ENCODE measurements at regions of chr22 and their contacts with region 1.

Region 1: DNA sequence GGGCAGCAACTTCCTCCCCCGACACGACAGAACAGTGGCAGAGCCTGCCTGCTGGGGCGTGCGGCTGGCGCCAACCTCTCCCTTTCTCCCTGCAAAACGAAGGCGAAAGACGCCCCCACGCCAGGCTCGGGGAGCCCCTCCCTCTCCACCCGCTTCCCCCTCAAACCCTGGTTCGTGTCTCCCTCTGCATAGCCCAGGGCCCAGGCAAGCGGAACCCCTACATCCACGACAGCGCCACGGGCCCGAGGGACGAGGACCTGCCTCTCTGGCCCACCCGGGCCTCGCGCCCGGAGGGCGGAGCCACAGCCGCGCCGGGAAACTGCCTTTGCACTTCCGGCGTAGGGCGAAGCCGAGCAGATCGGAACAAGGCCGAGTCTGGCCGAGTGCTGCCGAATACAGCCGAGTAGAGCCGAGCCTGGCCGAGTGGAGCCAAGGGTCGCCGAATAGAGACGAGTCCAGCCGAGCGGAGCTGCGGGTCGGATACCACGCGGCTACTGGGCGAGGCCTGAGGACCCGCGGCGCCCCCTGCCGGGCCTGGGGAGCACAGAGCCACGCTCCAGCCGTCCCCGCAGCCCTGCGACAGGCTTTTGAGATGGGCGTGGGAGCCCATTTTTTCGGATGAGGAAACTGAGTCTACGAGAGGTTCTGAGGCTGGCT is 11.2 kb upstream of the C1QTNF6 start:
- DNase-seq: peak; percentile 95
- H3K4me3 ChIP-seq: peak overlapping the region; percentile 75
- H3K27ac ChIP-seq: peak overlapping the region; percentile 61
- H3K27me3 ChIP-seq: no peaks in the 10 kb centered on the region
- CTCF ChIP-seq: peak; percentile 90

Region 2: GRCh38 chr22:37051391-37052385 is 147.5 kb before region 1 on chr22 and contains the start of gene KCTD17:
- CTCF ChIA-PET with region 1: interaction called, 10 read pairs
- POLR2A ChIA-PET with region 1: no interaction called
- DNase-seq: no peak
- H3K4me3 ChIP-seq: peak within 1 kb of the TSS; percentile 74
- H3K27ac ChIP-seq: no peak within 1 kb of the TSS
- H3K27me3 ChIP-seq: no peaks in the 10 kb centered on the region
- CTCF ChIP-seq: no peak
- polyA plus RNA-seq, gene KCTD17: 20.7 and 26.5 TPM in 2 replicates

Region 3: GRCh38 chr22:37166675-37167066 is 32.6 kb before region 1 on chr22:
- CTCF ChIA-PET with region 1: interaction called, 27 read pairs
- POLR2A ChIA-PET with region 1: no interaction called
- DNase-seq: no peak
- H3K4me3 ChIP-seq: no peak overlapping the region
- H3K27ac ChIP-seq: no peak overlapping the region
- H3K27me3 ChIP-seq: peaks cover 19% of the 10 kb centered on the region
- CTCF ChIP-seq: peak; percentile 91

Region 4: DNA sequence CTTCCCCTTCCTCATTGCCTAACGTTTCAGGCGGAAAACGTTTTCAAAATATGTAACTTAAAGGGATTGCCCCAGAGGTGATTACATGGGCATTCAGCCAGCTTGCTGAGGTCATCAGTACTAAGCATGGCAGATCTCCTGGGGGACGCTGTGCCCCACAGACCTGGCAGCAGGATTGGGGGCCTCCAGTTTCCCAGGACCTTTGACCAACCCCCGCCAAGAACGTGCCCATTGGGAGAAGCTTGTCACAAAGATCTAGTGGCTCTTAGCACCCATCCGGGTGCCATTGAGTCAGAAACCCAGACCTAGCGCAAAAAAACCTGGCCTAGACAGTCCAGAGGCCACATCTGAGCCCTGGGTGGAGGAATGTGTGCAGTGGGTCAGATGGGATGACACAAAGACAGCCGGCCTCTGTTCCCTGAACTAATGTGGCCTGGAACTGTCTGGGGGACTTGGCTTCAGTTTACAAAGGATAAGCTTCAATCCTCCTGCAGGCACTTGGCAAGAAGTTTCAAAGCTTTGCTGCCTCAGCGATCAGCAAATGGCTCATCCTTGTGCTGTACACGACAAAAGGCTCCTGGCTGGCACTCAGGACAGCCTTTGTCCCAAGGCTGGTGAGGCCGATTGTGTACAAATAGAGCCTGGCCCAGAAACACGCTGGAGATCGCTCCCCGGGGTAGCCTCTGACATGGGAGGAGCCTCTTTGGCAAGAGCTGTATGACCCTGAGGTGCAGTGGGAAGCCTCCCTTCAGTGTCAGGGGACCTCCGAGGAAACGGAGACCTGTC is 20.7 kb before region 1 on chr22:
- CTCF ChIA-PET with region 1: interaction called, 10 read pairs
- POLR2A ChIA-PET with region 1: no interaction called
- DNase-seq: no peak
- H3K4me3 ChIP-seq: no peak overlapping the region
- H3K27ac ChIP-seq: no peak overlapping the region
- H3K27me3 ChIP-seq: peaks cover 13% of the 10 kb centered on the region
- CTCF ChIP-seq: no peak

Region 5: GRCh38 chr22:37210041-37210803 is 11.0 kb after region 1 on chr22:
- CTCF ChIA-PET with region 1: interaction called, 23 read pairs
- POLR2A ChIA-PET with region 1: no interaction called
- DNase-seq: no peak
- H3K4me3 ChIP-seq: no peak overlapping the region
- H3K27ac ChIP-seq: no peak overlapping the region
- H3K27me3 ChIP-seq: peaks cover 37% of the 10 kb centered on the region
- CTCF ChIP-seq: no peak

Region 6: DNA sequence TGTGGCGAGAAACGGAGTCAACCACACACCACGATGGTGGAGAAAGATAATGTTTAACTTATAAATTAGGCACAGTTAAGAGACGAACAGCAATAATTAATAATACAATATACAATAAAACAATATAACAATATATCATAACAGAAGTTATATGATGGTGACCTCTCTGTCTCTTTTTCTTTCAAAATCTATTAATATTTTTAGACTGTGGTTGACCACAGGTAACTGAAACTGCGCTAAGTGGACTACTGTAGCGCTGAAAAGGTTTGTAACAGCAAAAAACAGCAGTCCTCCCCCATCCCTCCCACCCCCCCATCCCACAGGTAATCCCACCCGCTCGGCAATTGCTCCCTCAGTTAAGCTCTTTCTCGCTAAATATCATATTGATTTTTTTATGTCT is 16.7 kb after region 1 on chr22:
- CTCF ChIA-PET with region 1: interaction called, 26 read pairs
- POLR2A ChIA-PET with region 1: no interaction called
- DNase-seq: no peak
- H3K4me3 ChIP-seq: no peak overlapping the region
- H3K27ac ChIP-seq: no peak overlapping the region
- H3K27me3 ChIP-seq: peaks cover 48% of the 10 kb centered on the region
- CTCF ChIP-seq: no peak

Region 7: GRCh38 chr22:37260901-37261336 is 61.7 kb after region 1 on chr22:
- CTCF ChIA-PET with region 1: interaction called, 16 read pairs
- POLR2A ChIA-PET with region 1: no interaction called
- DNase-seq: no peak
- H3K4me3 ChIP-seq: no peak overlapping the region
- H3K27ac ChIP-seq: no peak overlapping the region
- H3K27me3 ChIP-seq: peaks cover 5% of the 10 kb centered on the region
- CTCF ChIP-seq: peak; percentile 93

Region 8: DNA sequence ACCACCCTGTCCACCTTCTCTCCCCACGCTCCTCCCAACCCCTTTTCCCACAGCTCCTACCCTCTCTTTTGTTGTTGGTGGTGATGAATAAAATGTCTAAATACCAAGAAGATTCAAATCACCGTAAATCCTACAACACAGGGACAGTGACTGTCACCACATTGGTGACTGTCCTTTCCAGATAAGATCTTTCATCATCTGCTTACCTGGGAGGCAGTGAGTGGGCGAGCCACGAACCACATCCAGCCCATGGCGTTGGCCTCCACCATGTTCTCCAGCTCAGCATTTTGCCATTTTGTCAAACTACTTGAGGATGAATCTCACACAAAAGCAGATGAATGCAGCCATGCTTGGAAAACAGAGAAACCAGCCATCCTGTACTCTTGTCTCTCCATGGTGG is 76.4 kb after region 1 on chr22:
- CTCF ChIA-PET with region 1: no interaction called
- POLR2A ChIA-PET with region 1: no interaction called
- DNase-seq: no peak
- H3K4me3 ChIP-seq: no peak overlapping the region
- H3K27ac ChIP-seq: no peak overlapping the region
- H3K27me3 ChIP-seq: no peaks in the 10 kb centered on the region
- CTCF ChIP-seq: no peak